Posterior cingulate gyrus (tissue), 11 donors: ENCODE measurements at regions of chr3 and their contacts with region 1.

Region 1: DNA sequence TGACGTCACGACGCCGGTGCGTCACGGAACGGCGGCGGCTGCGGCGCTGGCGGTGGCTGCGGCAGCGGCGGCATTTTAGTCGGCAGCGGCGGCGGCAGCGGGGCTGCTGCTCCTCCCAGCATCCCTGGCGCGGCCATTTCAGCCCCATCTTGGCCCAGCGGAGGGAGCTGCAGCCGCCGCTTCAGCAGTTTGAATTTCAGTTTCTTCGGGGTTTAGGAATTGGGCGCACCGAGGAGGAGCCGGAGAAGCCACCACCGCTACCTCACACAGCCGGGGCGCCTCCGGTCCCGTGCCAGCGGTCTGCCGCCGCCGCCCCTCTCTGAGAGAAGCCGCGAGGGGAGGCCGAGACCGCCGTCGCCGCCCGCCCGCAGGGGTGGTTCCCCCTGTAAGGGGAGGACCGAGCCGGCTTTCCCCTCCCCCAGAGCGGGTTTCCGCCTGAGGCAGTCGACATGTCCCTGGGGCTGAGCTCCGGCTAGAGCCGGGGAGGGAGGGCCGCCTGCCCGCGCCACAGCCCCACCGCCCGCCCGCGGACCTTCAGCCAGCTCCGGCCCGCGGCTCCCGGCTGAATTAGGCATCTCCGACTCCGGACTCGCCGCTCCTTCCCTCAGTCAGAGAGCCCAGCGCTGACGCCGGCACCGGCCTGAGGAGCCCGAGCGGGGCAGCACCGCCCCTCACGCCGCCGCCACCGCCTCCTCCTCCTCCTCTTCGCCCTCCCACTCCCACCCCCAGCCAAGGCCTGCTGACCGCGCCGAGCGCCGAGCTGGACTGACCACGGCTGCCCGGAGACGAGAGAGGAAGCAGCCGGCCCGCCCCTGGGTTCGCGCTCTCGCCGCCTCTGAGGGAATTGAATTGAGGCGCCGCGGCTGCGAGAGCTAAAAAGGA is at the start of gene TSC22D2:
- DNase-seq: peak; percentile 94 to 100 (median 97)

Region 2: DNA sequence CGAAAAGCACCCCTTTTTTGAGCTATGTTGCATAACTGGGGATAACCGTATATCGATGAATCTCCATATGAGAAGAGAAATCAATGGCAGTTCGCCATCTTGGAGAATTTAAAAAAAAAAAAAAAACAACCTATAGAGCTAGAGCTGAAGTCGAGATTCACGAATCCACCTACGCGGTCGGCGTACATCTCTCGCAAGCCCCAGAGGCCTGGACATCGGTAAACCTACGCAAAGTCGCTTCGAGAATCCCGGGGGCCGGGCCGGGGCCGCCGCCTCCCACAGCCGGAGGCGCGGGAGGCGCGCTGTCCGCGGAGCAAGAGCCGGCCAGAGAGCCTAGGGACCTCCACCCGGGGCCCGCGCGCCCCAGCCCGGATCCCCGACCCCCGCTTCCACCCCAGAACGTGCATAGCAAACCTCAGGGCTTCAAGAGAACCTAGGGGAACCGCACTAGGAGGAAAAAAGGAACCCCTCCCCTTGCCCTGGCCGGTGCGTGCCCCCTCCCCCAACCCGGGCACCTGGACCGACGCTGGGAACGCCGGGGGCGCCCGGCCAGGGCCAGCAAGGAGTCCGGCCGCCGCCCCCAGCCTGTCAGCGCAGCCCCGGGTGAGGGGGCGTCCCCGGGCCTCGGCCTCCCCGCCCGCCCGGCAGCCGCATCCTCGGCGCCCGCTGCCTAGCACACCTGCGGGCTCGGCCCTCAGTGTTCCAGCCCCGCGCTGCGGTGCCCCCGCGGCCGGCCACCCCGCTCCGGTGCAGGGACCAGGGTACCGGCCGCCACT is 438.3 kb before region 1 on chr3:
- intact Hi-C with region 1: loop called (anchors 5 kb)
- DNase-seq: peak; percentile 74 to 97 (median 80)

Region 3: DNA sequence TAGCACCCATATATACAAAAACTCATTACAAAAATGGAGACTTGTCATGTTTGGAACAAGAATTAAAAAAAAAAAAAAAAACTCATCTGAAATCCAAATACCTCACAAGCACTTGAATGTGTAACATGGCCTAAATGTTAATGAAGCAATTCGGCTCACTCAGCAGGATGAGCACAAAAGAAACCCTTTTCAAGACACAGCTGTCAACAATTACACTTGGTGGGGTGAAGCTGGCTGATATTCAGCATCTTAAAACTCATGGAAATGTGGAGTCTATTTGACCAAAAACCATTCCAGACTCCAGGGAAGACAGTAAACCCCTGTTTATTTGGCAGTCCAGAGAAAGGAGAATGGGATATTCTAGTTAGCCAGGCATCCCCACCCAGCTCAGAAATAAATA is 205.8 kb before region 1 on chr3:
- intact Hi-C with region 1: no loop called
- DNase-seq: no peak

Region 4: GRCh38 chr3:150348500-150348899 is 60.0 kb before region 1 on chr3:
- intact Hi-C with region 1: loop called (anchors 5 kb)
- DNase-seq: no peak

Region 5: DNA sequence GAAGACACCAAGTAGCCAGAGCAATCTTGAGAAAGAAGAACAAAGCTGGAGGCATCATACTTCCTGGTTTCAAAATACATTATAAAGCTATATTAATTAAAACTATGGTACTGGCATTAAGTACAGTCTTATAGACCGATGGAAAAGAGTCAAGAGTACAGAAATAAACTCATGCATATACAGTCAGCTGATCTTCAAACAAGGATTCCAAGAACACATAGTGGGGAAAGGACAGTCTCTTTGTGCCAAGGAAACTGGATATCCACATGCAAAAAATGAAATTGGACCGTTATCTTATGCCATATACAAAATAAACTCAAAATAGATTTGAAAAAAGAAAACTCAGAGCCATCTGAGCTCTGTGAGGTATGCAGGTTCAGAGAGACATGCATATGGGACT is 80.4 kb after region 1 on chr3:
- intact Hi-C with region 1: no loop called
- DNase-seq: no peak

Region 6: GRCh38 chr3:150546226-150547044 is 138.0 kb after region 1 on chr3 and contains the starts of genes EIF2A and SERP1:
- intact Hi-C with region 1: loop called (anchors 1 kb)
- DNase-seq: peak; percentile 98 to 100 (median 99)